ENCODE measurements at regions of chrX and their contacts with region 1.

Region 1: GRCh38 chrX:100685284-100685996 is 41.4 kb downstream of the SRPX2 start:
- DNase-seq: no peak
- ATAC-seq: peak; percentile 66
- H3K4me3 Mint-ChIP-seq: peak overlapping the region; percentile 11
- H3K27ac Mint-ChIP-seq: no peak overlapping the region
- H3K4me1 Mint-ChIP-seq: peaks cover 31% of the 10 kb centered on the region
- H3K27me3 Mint-ChIP-seq: no peaks in the 10 kb centered on the region
- CTCF ChIP-seq: no peak

Region 2: GRCh38 chrX:100512471-100512870 is 173.0 kb before region 1 on chrX:
- CTCF ChIA-PET with region 1: interaction called, 4 read pairs
- POLR2A ChIA-PET with region 1: no interaction called
- intact Hi-C with region 1: loop called (anchors 1 kb)
- DNase-seq: no peak
- ATAC-seq: no peak
- H3K4me3 Mint-ChIP-seq: no peak overlapping the region
- H3K27ac Mint-ChIP-seq: no peak overlapping the region
- H3K4me1 Mint-ChIP-seq: no peaks in the 10 kb centered on the region
- H3K27me3 Mint-ChIP-seq: peaks cover 2% of the 10 kb centered on the region
- CTCF ChIP-seq: no peak

Region 3: GRCh38 chrX:100674705-100675104 is 10.7 kb before region 1 on chrX:
- CTCF ChIA-PET with region 1: interaction called, 11 read pairs
- POLR2A ChIA-PET with region 1: no interaction called
- intact Hi-C with region 1: loop called (anchors 2 kb)
- DNase-seq: no peak
- ATAC-seq: no peak
- H3K4me3 Mint-ChIP-seq: no peak overlapping the region
- H3K27ac Mint-ChIP-seq: no peak overlapping the region
- H3K4me1 Mint-ChIP-seq: peaks cover 15% of the 10 kb centered on the region
- H3K27me3 Mint-ChIP-seq: no peaks in the 10 kb centered on the region
- CTCF ChIP-seq: no peak

Region 4: GRCh38 chrX:100768679-100769338 is 83.4 kb after region 1 on chrX:
- CTCF ChIA-PET with region 1: interaction called, 135 read pairs
- POLR2A ChIA-PET with region 1: interaction called, 5 read pairs
- intact Hi-C with region 1: loop called (anchors 1 kb)
- DNase-seq: peak; percentile 68
- ATAC-seq: peak; percentile 96
- H3K4me3 Mint-ChIP-seq: no peak overlapping the region
- H3K27ac Mint-ChIP-seq: no peak overlapping the region
- H3K4me1 Mint-ChIP-seq: no peaks in the 10 kb centered on the region
- H3K27me3 Mint-ChIP-seq: no peaks in the 10 kb centered on the region
- CTCF ChIP-seq: no peak

Region 5: GRCh38 chrX:100928660-100929613 is 243.5 kb after region 1 on chrX and contains the start of gene XKRX:
- CTCF ChIA-PET with region 1: no interaction called
- POLR2A ChIA-PET with region 1: no interaction called
- intact Hi-C with region 1: loop called (anchors 5 kb)
- DNase-seq: peak; percentile 23
- ATAC-seq: peak; percentile 71
- H3K4me3 Mint-ChIP-seq: peak within 1 kb of the TSS; percentile 94
- H3K27ac Mint-ChIP-seq: peak within 1 kb of the TSS; percentile 82
- H3K4me1 Mint-ChIP-seq: peaks cover 62% of the 10 kb centered on the region
- H3K27me3 Mint-ChIP-seq: no peaks in the 10 kb centered on the region
- CTCF ChIP-seq: no peak
- total RNA-seq, gene XKRX: 2.0 and 2.2 TPM in 2 replicates

Region 6: GRCh38 chrX:101206471-101206870 is 521.0 kb after region 1 on chrX:
- CTCF ChIA-PET with region 1: interaction called, 5 read pairs
- POLR2A ChIA-PET with region 1: no interaction called
- intact Hi-C with region 1: loop called (anchors 2 kb)
- DNase-seq: no peak
- ATAC-seq: peak; percentile 73
- H3K4me3 Mint-ChIP-seq: no peak overlapping the region
- H3K27ac Mint-ChIP-seq: no peak overlapping the region
- H3K4me1 Mint-ChIP-seq: peaks cover 16% of the 10 kb centered on the region
- H3K27me3 Mint-ChIP-seq: no peaks in the 10 kb centered on the region
- CTCF ChIP-seq: no peak

Region 7: GRCh38 chrX:101287402-101287801 is 602.0 kb after region 1 on chrX:
- CTCF ChIA-PET with region 1: no interaction called
- POLR2A ChIA-PET with region 1: no interaction called
- intact Hi-C with region 1: loop called (anchors 1 kb)
- DNase-seq: no peak
- ATAC-seq: peak; percentile 57
- H3K4me3 Mint-ChIP-seq: no peak overlapping the region
- H3K27ac Mint-ChIP-seq: no peak overlapping the region
- H3K4me1 Mint-ChIP-seq: no peaks in the 10 kb centered on the region
- H3K27me3 Mint-ChIP-seq: peaks cover 1% of the 10 kb centered on the region
- CTCF ChIP-seq: no peak